ENCODE measurements at regions of chr1 and their contacts with region 1.

Region 1: GRCh38 chr1:70382682-70383081 is 28.2 kb upstream of the ANKRD13C start:
- DNase-seq: no peak
- ATAC-seq: no peak
- H3K4me3 ChIP-seq: no peak overlapping the region
- H3K27ac ChIP-seq: no peak overlapping the region
- H3K4me1 ChIP-seq: peaks cover 23% of the 10 kb centered on the region
- H3K27me3 ChIP-seq: no peaks in the 10 kb centered on the region
- CTCF ChIP-seq: no peak

Region 2: DNA sequence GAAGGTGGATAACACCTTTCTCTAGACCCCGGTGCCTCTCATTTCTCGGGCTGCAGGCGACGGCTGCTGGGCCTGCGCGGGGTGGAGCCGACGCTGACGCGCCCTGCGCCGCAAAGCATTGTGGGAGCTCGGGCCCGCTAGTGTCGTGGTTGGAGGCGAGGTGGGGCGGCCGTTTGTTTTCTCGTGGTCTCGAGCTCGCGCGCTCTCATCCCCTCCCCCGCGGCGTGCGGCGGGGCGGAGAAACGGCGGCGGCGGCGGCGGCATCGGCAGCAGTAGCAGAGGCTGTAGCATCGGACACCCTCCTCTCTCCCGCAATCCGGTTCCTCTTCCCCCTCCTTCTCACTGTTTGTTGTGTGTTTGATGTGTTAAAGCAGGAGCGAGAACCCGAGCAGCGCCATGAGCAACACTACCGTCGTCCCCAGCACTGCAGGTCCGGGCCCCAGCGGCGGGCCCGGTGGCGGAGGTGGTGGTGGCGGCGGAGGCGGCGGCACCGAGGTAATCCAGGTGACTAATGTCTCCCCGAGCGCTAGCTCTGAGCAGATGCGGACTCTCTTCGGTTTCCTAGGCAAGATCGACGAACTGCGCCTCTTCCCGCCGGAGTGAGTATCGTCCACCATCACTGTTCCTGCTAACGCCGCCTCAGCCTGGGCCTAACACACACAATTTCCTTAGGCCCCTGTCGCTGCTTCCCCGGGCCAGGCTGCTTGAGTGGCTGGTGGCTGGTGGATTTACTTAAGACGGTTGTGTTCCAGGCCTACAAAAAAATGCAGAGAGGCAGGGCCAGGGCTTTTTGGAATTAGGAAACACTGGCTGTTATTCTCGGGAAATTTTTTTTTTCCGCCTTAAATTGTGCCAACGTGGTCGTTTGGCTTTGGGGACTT is 161.2 kb before region 1 on chr1 and contains the start of gene SRSF11:
- CTCF ChIA-PET with region 1: no interaction called
- POLR2A ChIA-PET with region 1: interaction called, 21 read pairs
- intact Hi-C with region 1: no loop called
- DNase-seq: peak; percentile 95
- ATAC-seq: peak; percentile 97
- H3K4me3 ChIP-seq: peak within 1 kb of the TSS; percentile 99
- H3K27ac ChIP-seq: peak within 1 kb of the TSS; percentile 86
- H3K4me1 ChIP-seq: peaks cover 20% of the 10 kb centered on the region
- H3K27me3 ChIP-seq: no peaks in the 10 kb centered on the region
- CTCF ChIP-seq: no peak
- total RNA-seq, gene SRSF11: 98.7 and 112 TPM in 2 replicates

Region 3: DNA sequence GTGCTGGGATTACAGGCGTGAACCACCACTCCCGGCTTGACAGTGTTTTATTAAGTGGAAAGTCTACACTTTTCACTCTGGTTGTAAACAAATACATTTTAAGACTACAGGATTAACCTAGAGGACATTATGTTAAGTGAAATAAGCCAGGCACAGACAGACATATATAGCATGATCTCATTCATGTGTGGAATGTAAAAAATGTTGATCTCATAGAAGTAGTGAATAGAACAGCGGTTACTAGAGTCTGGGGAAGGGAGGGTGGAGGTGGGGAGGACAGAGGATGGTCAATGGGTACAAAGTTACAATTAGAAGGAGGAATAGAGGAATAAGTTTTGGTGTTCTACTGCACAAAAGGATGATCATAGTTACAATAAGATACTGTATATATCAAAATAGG is 45.3 kb after region 1 on chr1:
- CTCF ChIA-PET with region 1: no interaction called
- POLR2A ChIA-PET with region 1: no interaction called
- intact Hi-C with region 1: loop called (anchors 2 kb)
- DNase-seq: peak; percentile 11
- ATAC-seq: no peak
- H3K4me3 ChIP-seq: no peak overlapping the region
- H3K27ac ChIP-seq: no peak overlapping the region
- H3K4me1 ChIP-seq: peaks cover 40% of the 10 kb centered on the region
- H3K27me3 ChIP-seq: no peaks in the 10 kb centered on the region
- CTCF ChIP-seq: no peak

Region 4: GRCh38 chr1:70458131-70458530 is 75.4 kb after region 1 on chr1:
- CTCF ChIA-PET with region 1: no interaction called
- POLR2A ChIA-PET with region 1: no interaction called
- intact Hi-C with region 1: no loop called
- DNase-seq: no peak
- ATAC-seq: no peak
- H3K4me3 ChIP-seq: no peak overlapping the region
- H3K27ac ChIP-seq: no peak overlapping the region
- H3K4me1 ChIP-seq: no peaks in the 10 kb centered on the region
- H3K27me3 ChIP-seq: no peaks in the 10 kb centered on the region
- CTCF ChIP-seq: no peak